Tibial artery (tissue), 4 donors: ENCODE measurements at regions of chr2 and their contacts with region 1.

Region 1: DNA sequence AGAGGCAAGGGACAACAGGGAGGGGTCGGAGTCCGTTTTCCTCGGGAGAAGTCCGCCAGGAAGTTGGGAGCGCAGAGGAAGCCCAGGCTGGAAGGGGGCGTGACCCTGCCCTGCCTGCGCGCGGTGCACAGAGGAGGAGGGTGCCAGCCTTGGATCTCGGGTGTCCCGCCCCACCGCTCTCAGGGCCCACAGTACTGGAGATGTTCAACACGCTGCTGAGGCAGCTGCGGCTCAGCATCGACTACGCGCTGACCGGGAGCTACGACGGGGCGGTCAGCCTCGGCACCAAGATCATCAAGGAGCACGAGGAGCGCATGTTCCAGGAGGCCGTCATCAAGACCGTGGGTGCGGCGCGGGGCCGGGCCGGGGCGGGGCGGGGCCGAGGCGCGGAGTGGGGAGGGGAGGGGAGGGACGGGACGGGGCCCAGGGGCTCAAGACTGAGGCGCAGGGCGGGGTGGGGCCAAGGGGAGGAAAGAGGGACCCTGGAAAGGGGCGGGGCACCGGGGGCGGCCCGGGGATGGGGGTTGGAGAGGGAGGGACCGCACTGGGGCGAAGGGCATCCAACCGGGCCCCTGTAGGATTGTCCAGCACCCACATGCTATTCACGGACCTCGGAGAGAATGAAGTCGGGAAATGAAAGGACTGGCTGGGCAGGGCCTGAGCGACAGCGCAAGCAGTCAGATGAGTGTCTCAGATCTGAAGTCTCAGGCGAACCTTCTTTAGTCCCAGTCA is 36.6 kb downstream of the POMC start:
- DNase-seq: no peak
- H3K4me3 ChIP-seq: peak overlapping the region in 1 of 2 donors; percentile 39
- H3K27ac ChIP-seq: no peak overlapping the region
- H3K4me1 ChIP-seq: peaks cover 0 to 11% (median 4%) of the 10 kb centered on the region in 4 donors
- H3K27me3 ChIP-seq: peaks cover 0 to 27% of the 10 kb centered on the region in 2 donors
- CTCF ChIP-seq: no peak

Region 2: GRCh38 chr2:24409700-24410556 is 721.8 kb before region 1 on chr2:
- intact Hi-C with region 1: loop called (anchors 10 kb)
- DNase-seq: peak in 1 of 2 donors; percentile 37
- H3K4me3 ChIP-seq: no peak overlapping the region
- H3K27ac ChIP-seq: no peak overlapping the region
- H3K4me1 ChIP-seq: no peaks in the 10 kb centered on the region
- H3K27me3 ChIP-seq: peaks cover 0 to 18% of the 10 kb centered on the region in 2 donors
- CTCF ChIP-seq: peak; percentile 82 to 83

Region 3: GRCh38 chr2:24977631-24978030 is 154.1 kb before region 1 on chr2:
- intact Hi-C with region 1: loop called (anchors 2 kb)
- DNase-seq: no peak
- H3K4me3 ChIP-seq: no peak overlapping the region
- H3K27ac ChIP-seq: no peak overlapping the region
- H3K4me1 ChIP-seq: peaks cover 0 to 23% (median 8%) of the 10 kb centered on the region in 4 donors
- H3K27me3 ChIP-seq: no peaks in the 10 kb centered on the region
- CTCF ChIP-seq: no peak

Region 4: DNA sequence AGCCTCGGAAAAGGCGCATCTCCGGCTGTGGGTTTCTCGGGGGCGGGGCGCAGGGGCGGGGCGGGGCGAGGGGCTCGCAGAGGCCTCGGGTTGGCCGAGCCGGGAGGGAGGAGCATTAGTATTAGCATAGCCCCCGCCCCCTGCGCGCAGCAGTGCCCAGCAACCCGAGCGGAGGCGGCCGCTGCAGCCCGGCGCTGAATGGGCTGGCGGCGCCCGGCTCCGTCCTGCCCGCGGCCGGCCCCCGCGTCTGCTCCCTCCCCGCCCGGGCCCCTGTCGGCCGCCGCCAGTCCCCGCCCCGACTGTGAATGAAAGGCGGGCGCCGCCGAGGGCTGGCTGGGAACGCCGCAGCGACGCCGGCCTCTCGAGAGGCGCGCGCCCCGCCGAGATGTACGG is 89.8 kb before region 1 on chr2 and contains the start of gene EFR3B:
- intact Hi-C with region 1: loop called (anchors 5 kb)
- DNase-seq: peak; percentile 96 to 97
- H3K4me3 ChIP-seq: peak within 1 kb of the TSS; percentile 59 to 77
- H3K27ac ChIP-seq: peak within 1 kb of the TSS; percentile 47 to 69
- H3K4me1 ChIP-seq: peaks cover 0 to 26% (median 14%) of the 10 kb centered on the region in 4 donors
- H3K27me3 ChIP-seq: no peaks in the 10 kb centered on the region
- CTCF ChIP-seq: no peak